Pancreas (tissue), 10 donors: ENCODE measurements at regions of chr12 and their contacts with region 1.

Region 1: DNA sequence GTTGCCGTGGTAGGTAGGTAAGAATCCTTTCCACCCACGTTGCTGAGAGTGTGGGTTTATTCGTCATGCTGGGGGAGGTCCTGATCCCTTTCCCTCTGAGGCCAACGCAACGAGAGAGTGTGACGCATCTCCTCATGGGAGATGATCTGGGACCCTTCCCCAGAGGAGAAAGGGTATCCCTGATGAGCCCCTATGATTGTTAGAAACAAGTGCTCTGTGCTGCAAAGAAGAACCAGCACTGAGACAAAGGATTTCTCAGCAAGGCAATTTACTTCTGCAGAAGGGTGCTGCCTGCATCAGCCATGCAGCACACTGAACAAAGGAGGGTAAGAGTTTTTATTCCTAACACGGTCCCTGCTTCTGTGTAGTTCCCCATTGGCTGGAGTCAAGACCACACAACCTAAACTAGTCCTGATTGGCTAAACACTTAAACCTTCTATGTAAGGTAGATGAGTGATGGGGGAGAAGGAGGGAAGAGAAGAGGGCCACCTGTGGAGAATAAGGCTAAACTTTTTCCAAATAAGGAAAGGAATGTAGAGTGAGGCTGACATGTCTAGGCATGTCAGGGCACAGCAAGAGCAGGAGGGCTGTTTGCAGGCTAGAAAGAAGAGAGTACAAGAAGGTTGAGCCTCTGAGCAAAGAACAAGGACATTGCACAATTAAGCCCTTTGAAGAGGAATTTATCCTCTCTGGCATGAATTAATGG is 21.3 kb downstream of the CLEC2A start:
- DNase-seq: no peak
- ATAC-seq: no peak
- H3K4me3 ChIP-seq: no peak overlapping the region
- H3K27ac ChIP-seq: no peak overlapping the region
- H3K4me1 ChIP-seq: no peaks in the 10 kb centered on the region
- H3K27me3 ChIP-seq: no peaks in the 10 kb centered on the region
- CTCF ChIP-seq: no peak

Region 2: GRCh38 chr12:9827209-9827888 is 83.5 kb before region 1 on chr12 and contains the start of gene KLRF1:
- intact Hi-C with region 1: loop called in 1 of 3 experiments (anchors 10 kb)
- DNase-seq: no peak
- ATAC-seq: no peak
- H3K4me3 ChIP-seq: no peak within 1 kb of the TSS
- H3K27ac ChIP-seq: no peak within 1 kb of the TSS
- H3K4me1 ChIP-seq: no peaks in the 10 kb centered on the region
- H3K27me3 ChIP-seq: no peaks in the 10 kb centered on the region
- CTCF ChIP-seq: no peak
- total RNA-seq, gene KLRF1: 0.28 to 0.76 (median 0.35) TPM in 5 of 6 donors, not detected in the other

Region 3: GRCh38 chr12:9948606-9949296 is 37.9 kb after region 1 on chr12:
- intact Hi-C with region 1: no loop called
- DNase-seq: no peak
- ATAC-seq: peak in 1 of 4 donors; percentile 37
- H3K4me3 ChIP-seq: no peak overlapping the region
- H3K27ac ChIP-seq: no peak overlapping the region
- H3K4me1 ChIP-seq: no peaks in the 10 kb centered on the region
- H3K27me3 ChIP-seq: no peaks in the 10 kb centered on the region
- CTCF ChIP-seq: no peak